IMR-90 (cell line): ENCODE measurements at regions of chr7 and their contacts with region 1.

Region 1: DNA sequence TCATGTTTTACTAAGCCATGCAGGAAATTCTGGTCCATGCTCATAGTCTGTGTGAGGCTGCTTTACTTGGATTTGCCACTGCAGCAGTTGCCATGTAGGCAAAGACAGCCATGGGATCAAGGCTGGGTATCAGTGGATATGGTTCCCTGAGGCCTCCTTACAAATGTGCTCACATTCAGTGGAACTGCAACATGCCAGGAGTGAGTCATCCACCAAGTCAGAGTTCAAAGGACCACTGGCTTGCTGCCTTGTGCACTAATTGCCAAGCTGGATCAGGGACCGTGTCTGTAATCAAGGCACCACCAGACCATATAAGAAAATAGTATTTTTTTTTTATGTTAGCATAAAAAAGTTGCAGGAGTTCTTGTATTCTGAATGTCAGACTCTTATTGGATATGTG is 101.0 kb downstream of the CDCA7L start:
- DNase-seq: no peak
- ATAC-seq: no peak
- H3K4me3 ChIP-seq: no peak overlapping the region
- H3K27ac ChIP-seq: no peak overlapping the region
- H3K4me1 ChIP-seq: no peaks in the 10 kb centered on the region
- H3K27me3 ChIP-seq: no peaks in the 10 kb centered on the region
- CTCF ChIP-seq: no peak
- POLR2A ChIP-seq: no peak
- RAD21 ChIP-seq: no peak

Region 2: GRCh38 chr7:20839198-20839735 is 1005.5 kb before region 1 on chr7:
- CTCF ChIA-PET with region 1: no interaction called
- POLR2A ChIA-PET with region 1: no interaction called
- dilution Hi-C with region 1: no loop called
- in situ Hi-C with region 1: no loop called
- intact Hi-C with region 1: no loop called
- DNase-seq: no peak
- ATAC-seq: no peak
- H3K4me3 ChIP-seq: no peak overlapping the region
- H3K27ac ChIP-seq: no peak overlapping the region
- H3K4me1 ChIP-seq: no peaks in the 10 kb centered on the region
- H3K27me3 ChIP-seq: no peaks in the 10 kb centered on the region
- CTCF ChIP-seq: no peak
- POLR2A ChIP-seq: no peak
- RAD21 ChIP-seq: no peak

Region 3: GRCh38 chr7:21777921-21778320 is 66.8 kb before region 1 on chr7:
- CTCF ChIA-PET with region 1: no interaction called
- POLR2A ChIA-PET with region 1: no interaction called
- dilution Hi-C with region 1: no loop called
- in situ Hi-C with region 1: no loop called
- intact Hi-C with region 1: loop called (anchors 5 kb)
- DNase-seq: no peak
- ATAC-seq: no peak
- H3K4me3 ChIP-seq: no peak overlapping the region
- H3K27ac ChIP-seq: no peak overlapping the region
- H3K4me1 ChIP-seq: no peaks in the 10 kb centered on the region
- H3K27me3 ChIP-seq: no peaks in the 10 kb centered on the region
- CTCF ChIP-seq: no peak
- POLR2A ChIP-seq: no peak
- RAD21 ChIP-seq: no peak

Region 4: GRCh38 chr7:21912305-21912704 is 67.6 kb after region 1 on chr7:
- CTCF ChIA-PET with region 1: no interaction called
- POLR2A ChIA-PET with region 1: no interaction called
- dilution Hi-C with region 1: no loop called
- in situ Hi-C with region 1: no loop called
- intact Hi-C with region 1: no loop called
- DNase-seq: peak; percentile 66
- ATAC-seq: no peak; the same call in 1 of the 2 replicates
- H3K4me3 ChIP-seq: no peak overlapping the region
- H3K27ac ChIP-seq: no peak overlapping the region
- H3K4me1 ChIP-seq: no peaks in the 10 kb centered on the region
- H3K27me3 ChIP-seq: no peaks in the 10 kb centered on the region
- CTCF ChIP-seq: no peak
- POLR2A ChIP-seq: no peak
- RAD21 ChIP-seq: no peak

Region 5: GRCh38 chr7:22016507-22016906 is 171.8 kb after region 1 on chr7:
- CTCF ChIA-PET with region 1: no interaction called
- POLR2A ChIA-PET with region 1: no interaction called
- dilution Hi-C with region 1: no loop called
- in situ Hi-C with region 1: no loop called
- intact Hi-C with region 1: no loop called
- DNase-seq: no peak
- ATAC-seq: no peak
- H3K4me3 ChIP-seq: no peak overlapping the region
- H3K27ac ChIP-seq: no peak overlapping the region
- H3K4me1 ChIP-seq: no peaks in the 10 kb centered on the region
- H3K27me3 ChIP-seq: 0 out of 2 replicates have a peak, but pooled peaks cover 1% of the 10 kb centered on the region
- CTCF ChIP-seq: no peak
- POLR2A ChIP-seq: no peak
- RAD21 ChIP-seq: no peak